Right cardiac atrium (tissue), 5 donors: ENCODE measurements at regions of chr13 and their contacts with region 1.

Region 1: GRCh38 chr13:45301243-45301642 is 39.7 kb downstream of the TPT1 start:
- DNase-seq: no peak
- ATAC-seq: no peak
- H3K4me3 ChIP-seq: no peak overlapping the region
- H3K27ac ChIP-seq: no peak overlapping the region
- H3K4me1 ChIP-seq: no peaks in the 10 kb centered on the region
- H3K27me3 ChIP-seq: no peaks in the 10 kb centered on the region

Region 2: GRCh38 chr13:45055198-45055901 is 245.9 kb before region 1 on chr13:
- intact Hi-C with region 1: loop called in 1 of 4 experiments (anchors 10 kb)
- DNase-seq: no peak
- ATAC-seq: no peak
- H3K4me3 ChIP-seq: no peak overlapping the region
- H3K27ac ChIP-seq: no peak overlapping the region
- H3K4me1 ChIP-seq: peaks cover 4% of the 10 kb centered on the region
- H3K27me3 ChIP-seq: no peaks in the 10 kb centered on the region

Region 3: GRCh38 chr13:45748941-45749759 is 447.9 kb after region 1 on chr13:
- intact Hi-C with region 1: no loop called
- DNase-seq: peak in 2 of 3 donors; percentile 9 to 36
- ATAC-seq: no peak
- H3K4me3 ChIP-seq: no peak overlapping the region
- H3K27ac ChIP-seq: no peak overlapping the region
- H3K4me1 ChIP-seq: peaks cover 3% of the 10 kb centered on the region
- H3K27me3 ChIP-seq: no peaks in the 10 kb centered on the region